ENCODE measurements at regions of chr6 and their contacts with region 1.

Region 1: GRCh38 chr6:42547407-42548329 is 16.2 kb upstream of the UBR2 start:
- DNase-seq: peak; percentile 81 to 91 (median 90)
- H3K4me3 ChIP-seq: peak overlapping the region in 6 of 7 experiments; percentile 65 to 85 (median 70)
- H3K27ac ChIP-seq: peak overlapping the region; percentile 13 to 67
- H3K4me1 ChIP-seq: peaks cover 2 to 12% (median 8%) of the 10 kb centered on the region in 4 experiments
- H3K27me3 ChIP-seq: peaks cover 0 to 2% (median 0%) of the 10 kb centered on the region in 5 experiments

Region 2: DNA sequence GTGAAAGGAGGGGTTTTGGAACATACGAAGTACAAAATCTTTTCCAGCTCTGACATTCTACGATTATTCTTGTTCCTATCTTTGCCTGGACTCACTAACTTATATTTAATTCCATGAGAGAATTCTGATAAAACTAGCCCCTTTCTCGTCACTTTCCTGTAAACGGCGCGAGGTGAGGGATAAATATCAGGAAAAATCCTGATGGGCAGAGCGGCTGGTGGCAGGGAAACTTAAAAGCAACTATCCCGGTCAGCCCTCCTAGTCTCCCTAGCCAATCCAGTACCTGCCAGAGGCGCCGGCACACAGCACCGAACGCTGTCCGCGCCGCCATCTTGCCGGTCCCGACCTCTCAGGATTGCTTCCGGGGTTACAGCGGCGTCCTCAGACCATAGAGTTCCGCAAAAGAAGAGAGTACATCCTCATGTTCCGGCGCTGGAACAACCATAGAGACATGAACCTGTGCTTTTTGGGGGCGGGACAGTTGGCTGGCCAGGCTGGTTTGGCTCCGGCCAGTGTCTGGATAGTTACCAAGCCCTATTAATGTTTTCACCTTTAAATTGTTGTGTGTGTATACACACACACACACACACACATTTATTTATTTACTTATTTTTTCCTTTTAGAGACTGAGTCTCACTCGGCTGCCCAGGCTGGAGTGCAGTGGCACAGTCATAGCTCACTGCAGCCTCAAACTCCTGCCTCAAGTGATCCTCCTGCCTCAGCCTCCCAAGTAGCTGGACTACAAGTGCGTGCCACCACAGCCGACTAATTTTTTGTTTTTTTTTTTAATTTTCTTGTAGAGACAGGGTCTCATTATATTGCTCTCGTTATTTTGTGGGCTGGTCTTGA is 329.9 kb before region 1 on chr6 and contains the start of gene MRPS10:
- CTCF ChIA-PET with region 1: interaction called, 13 read pairs
- POLR2A ChIA-PET with region 1: no interaction called
- DNase-seq: peak; percentile 95 to 96 (median 96)
- H3K4me3 ChIP-seq: peak within 1 kb of the TSS; percentile 56 to 100 (median 98)
- H3K27ac ChIP-seq: peak within 1 kb of the TSS; percentile 86 to 92
- H3K4me1 ChIP-seq: peaks cover 4 to 16% (median 8%) of the 10 kb centered on the region in 4 experiments
- H3K27me3 ChIP-seq: no peaks in the 10 kb centered on the region

Region 3: DNA sequence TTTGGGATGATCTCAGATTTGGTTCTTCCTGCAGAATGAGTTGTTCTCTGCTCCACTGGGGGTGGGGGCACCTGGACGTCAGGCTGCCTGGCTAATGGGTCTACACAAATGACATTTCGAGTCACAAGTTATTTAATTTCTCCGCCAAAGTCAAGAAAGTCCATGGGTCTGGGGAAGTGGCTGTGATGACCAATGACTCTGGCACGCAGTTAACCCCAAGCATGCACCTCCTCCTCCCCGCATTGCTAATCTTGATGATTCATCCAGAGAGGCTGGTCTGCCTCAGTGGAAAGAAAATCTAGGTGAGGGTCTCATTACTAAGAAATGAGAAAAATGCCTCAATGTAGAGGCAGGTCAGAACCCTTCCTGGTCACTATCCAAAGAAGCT is 231.7 kb before region 1 on chr6:
- CTCF ChIA-PET with region 1: interaction called, 10 read pairs
- POLR2A ChIA-PET with region 1: no interaction called
- DNase-seq: no peak
- H3K4me3 ChIP-seq: no peak overlapping the region
- H3K27ac ChIP-seq: no peak overlapping the region
- H3K4me1 ChIP-seq: peaks cover 4 to 24% (median 8%) of the 10 kb centered on the region in 4 experiments
- H3K27me3 ChIP-seq: no peaks in the 10 kb centered on the region

Region 4: DNA sequence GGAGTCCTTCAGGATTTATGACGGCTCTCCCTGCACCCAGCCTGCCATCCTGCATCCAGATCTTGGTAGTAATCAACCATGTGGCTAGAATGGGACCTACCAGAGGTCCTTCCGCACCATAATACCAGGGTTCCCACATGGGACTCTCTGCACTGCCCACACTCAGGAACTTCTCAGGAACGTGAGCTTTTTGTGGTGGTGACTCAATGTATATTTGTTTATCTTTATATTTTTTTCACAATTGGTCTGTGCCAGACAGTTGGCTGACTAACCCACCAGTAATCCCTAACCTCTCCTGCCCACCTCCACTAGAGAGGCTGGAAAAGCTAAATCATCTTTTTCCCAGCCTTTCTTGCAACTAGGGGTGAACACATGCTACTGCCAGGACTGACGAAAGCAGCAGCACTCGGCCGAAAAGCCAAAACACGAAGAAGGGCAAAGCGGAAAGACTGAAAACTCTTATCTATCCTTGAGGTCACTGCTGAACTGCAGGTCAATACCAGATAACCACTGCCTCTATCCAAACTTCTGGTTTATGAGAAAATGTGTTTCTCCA is 208.9 kb before region 1 on chr6:
- CTCF ChIA-PET with region 1: no interaction called
- POLR2A ChIA-PET with region 1: no interaction called
- DNase-seq: peak in 2 of 3 donors; percentile 12 to 21
- H3K4me3 ChIP-seq: no peak overlapping the region
- H3K27ac ChIP-seq: no peak overlapping the region
- H3K4me1 ChIP-seq: no peaks in the 10 kb centered on the region
- H3K27me3 ChIP-seq: no peaks in the 10 kb centered on the region

Region 5: GRCh38 chr6:42498473-42499128 is 49.1 kb before region 1 on chr6:
- CTCF ChIA-PET with region 1: no interaction called
- POLR2A ChIA-PET with region 1: no interaction called
- DNase-seq: no peak
- H3K4me3 ChIP-seq: no peak overlapping the region
- H3K27ac ChIP-seq: no peak overlapping the region
- H3K4me1 ChIP-seq: no peaks in the 10 kb centered on the region
- H3K27me3 ChIP-seq: no peaks in the 10 kb centered on the region

Region 6: GRCh38 chr6:42532038-42532669 is 15.5 kb before region 1 on chr6:
- CTCF ChIA-PET with region 1: interaction called, 22 read pairs
- POLR2A ChIA-PET with region 1: interaction called, 3 read pairs
- DNase-seq: peak; percentile 70 to 90 (median 90)
- H3K4me3 ChIP-seq: no peak overlapping the region
- H3K27ac ChIP-seq: no peak overlapping the region
- H3K4me1 ChIP-seq: no peaks in the 10 kb centered on the region
- H3K27me3 ChIP-seq: no peaks in the 10 kb centered on the region

Region 7: DNA sequence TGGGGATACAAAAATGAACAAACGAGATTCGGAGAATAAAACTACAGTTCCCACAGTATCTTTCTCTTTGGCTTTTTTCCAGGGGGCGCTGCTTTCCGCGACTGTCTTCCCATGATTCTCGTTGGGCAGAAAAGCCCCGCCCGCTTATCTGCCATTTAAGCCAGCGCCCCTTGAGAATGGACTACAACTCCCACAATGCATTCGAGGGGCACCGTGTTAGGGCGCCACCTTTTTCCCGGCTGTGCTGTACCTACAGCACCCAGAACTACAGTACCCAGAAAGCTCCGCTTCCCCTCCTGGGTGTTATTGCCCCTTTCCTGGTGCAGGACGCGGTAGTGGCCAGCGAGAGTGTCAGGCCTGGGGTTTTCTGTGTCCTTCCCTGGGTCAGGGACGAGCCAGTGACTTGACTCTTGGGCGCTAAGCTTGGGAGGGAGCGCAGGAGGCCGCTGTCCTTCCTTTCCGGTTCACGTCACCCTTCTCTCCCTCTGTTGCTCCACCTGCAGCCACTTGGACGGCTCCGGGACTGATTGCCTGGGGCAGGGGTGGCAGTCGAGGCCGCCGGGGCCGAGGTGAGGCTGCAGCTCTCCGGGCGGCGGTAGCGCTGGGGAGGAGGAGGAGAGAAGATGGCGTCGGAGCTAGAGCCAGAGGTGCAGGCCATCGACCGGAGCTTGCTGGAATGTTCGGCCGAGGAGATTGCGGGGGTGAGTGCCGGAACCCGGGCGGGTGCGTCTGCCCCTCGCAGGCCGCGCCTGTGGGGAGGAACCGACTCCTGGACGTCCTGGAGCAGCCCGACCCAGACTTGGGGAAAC is 16.2 kb after region 1 on chr6 and contains the start of gene UBR2:
- CTCF ChIA-PET with region 1: interaction called, 35 read pairs
- POLR2A ChIA-PET with region 1: no interaction called
- DNase-seq: peak; percentile 99
- H3K4me3 ChIP-seq: peak within 1 kb of the TSS; percentile 86 to 100 (median 99)
- H3K27ac ChIP-seq: peak within 1 kb of the TSS; percentile 75 to 90
- H3K4me1 ChIP-seq: peaks cover 8 to 25% (median 15%) of the 10 kb centered on the region in 4 experiments
- H3K27me3 ChIP-seq: no peaks in the 10 kb centered on the region